ENCODE measurements at regions of chr1 and their contacts with region 1.

Region 1: GRCh38 chr1:19688041-19688842 is 23.6 kb downstream of the HTR6 start:
- DNase-seq: peak in 6 of 9 donors; percentile 33 to 73 (median 66)
- ATAC-seq: peak; percentile 48
- H3K4me3 ChIP-seq: peak overlapping the region; percentile 6
- H3K4me3 Mint-ChIP-seq: peak overlapping the region in 9 of 10 donors; percentile 42 to 83 (median 69)
- H3K27ac ChIP-seq: peak overlapping the region; percentile 70
- H3K27ac Mint-ChIP-seq: peak overlapping the region in 8 of 9 donors; percentile 88 to 96 (median 93)
- H3K4me1 ChIP-seq: peaks cover 38 to 43% of the 10 kb centered on the region in 2 donors
- H3K4me1 Mint-ChIP-seq: peaks cover 4 to 53% (median 44%) of the 10 kb centered on the region in 7 donors
- H3K27me3 ChIP-seq: no peaks in the 10 kb centered on the region
- H3K27me3 Mint-ChIP-seq: no peaks in the 10 kb centered on the region

Region 2: GRCh38 chr1:19273106-19273843 is 415.0 kb before region 1 on chr1:
- CTCF ChIA-PET with region 1: no interaction called
- POLR2A ChIA-PET with region 1: no interaction called
- intact Hi-C with region 1: no loop called
- DNase-seq: no peak
- ATAC-seq: no peak
- H3K4me3 ChIP-seq: no peak overlapping the region
- H3K4me3 Mint-ChIP-seq: peak overlapping the region in 4 of 10 donors; percentile 10 to 46 (median 18)
- H3K27ac ChIP-seq: no peak overlapping the region
- H3K27ac Mint-ChIP-seq: peak overlapping the region in 1 of 9 donors; percentile 26
- H3K4me1 ChIP-seq: no peaks in the 10 kb centered on the region
- H3K4me1 Mint-ChIP-seq: peaks cover 0 to 5% (median 2%) of the 10 kb centered on the region in 7 donors
- H3K27me3 ChIP-seq: no peaks in the 10 kb centered on the region
- H3K27me3 Mint-ChIP-seq: peaks cover 17 to 23% (median 20%) of the 10 kb centered on the region in 5 donors

Region 3: GRCh38 chr1:19704247-19705113 is 16.2 kb after region 1 on chr1:
- CTCF ChIA-PET with region 1: interaction called, 3 read pairs
- POLR2A ChIA-PET with region 1: interaction called, 4 read pairs
- intact Hi-C with region 1: loop called in 1 of 2 experiments (anchors 2 kb)
- DNase-seq: peak; percentile 18 to 72 (median 50)
- ATAC-seq: peak; percentile 80
- H3K4me3 ChIP-seq: no peak overlapping the region
- H3K4me3 Mint-ChIP-seq: no peak overlapping the region
- H3K27ac ChIP-seq: no peak overlapping the region
- H3K27ac Mint-ChIP-seq: peak overlapping the region in 2 of 9 donors; percentile 22 to 72
- H3K4me1 ChIP-seq: peaks cover 10 to 13% of the 10 kb centered on the region in 2 donors
- H3K4me1 Mint-ChIP-seq: peaks cover 0 to 25% (median 12%) of the 10 kb centered on the region in 7 donors
- H3K27me3 ChIP-seq: no peaks in the 10 kb centered on the region
- H3K27me3 Mint-ChIP-seq: no peaks in the 10 kb centered on the region

Region 4: DNA sequence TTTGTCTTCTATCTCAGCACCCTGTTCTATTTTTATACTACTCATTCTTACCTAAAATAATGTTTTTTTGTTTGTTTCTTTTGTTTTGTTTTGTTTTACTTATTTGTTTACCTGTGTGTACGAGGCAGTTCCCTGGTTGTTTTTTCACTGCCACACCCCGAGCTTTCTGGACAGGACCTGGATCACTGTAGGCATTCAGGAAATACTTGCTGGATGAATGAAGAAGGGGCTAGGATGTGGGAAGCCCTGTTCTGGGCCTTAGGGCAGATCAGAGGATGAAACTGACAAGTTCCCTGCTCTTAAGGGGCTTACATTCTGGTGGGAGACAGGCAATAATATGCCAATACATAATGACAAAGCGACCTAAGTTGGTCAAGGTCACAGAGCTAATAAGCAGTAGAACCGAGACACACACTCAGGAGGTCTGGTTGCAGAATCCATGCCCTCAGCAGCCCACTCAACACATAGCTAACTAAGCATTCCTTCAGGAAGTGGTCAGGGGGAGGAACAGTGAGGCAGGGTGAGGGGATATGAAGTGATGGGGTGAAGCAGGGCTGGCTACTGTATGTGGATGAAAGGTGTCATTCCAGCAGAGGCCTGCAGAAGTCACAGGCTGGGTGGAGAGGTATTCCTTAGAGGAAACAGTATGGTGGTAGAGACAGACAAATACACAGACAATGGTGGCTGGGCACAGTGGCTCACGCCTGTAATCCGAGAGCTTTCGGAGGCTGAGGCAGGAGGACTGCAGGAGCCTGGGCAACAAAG is 97.2 kb after region 1 on chr1:
- CTCF ChIA-PET with region 1: no interaction called
- POLR2A ChIA-PET with region 1: no interaction called
- intact Hi-C with region 1: no loop called
- DNase-seq: no peak
- ATAC-seq: no peak
- H3K4me3 ChIP-seq: no peak overlapping the region
- H3K4me3 Mint-ChIP-seq: no peak overlapping the region
- H3K27ac ChIP-seq: no peak overlapping the region
- H3K27ac Mint-ChIP-seq: no peak overlapping the region
- H3K4me1 ChIP-seq: no peaks in the 10 kb centered on the region
- H3K4me1 Mint-ChIP-seq: peaks cover 2 to 10% (median 7%) of the 10 kb centered on the region in 7 donors
- H3K27me3 ChIP-seq: no peaks in the 10 kb centered on the region
- H3K27me3 Mint-ChIP-seq: no peaks in the 10 kb centered on the region

Measured in naive thymus-derived CD4-positive, alpha-beta T cell (primary cell).